ENCODE measurements at regions of chr10 and their contacts with region 1.

Region 1: DNA sequence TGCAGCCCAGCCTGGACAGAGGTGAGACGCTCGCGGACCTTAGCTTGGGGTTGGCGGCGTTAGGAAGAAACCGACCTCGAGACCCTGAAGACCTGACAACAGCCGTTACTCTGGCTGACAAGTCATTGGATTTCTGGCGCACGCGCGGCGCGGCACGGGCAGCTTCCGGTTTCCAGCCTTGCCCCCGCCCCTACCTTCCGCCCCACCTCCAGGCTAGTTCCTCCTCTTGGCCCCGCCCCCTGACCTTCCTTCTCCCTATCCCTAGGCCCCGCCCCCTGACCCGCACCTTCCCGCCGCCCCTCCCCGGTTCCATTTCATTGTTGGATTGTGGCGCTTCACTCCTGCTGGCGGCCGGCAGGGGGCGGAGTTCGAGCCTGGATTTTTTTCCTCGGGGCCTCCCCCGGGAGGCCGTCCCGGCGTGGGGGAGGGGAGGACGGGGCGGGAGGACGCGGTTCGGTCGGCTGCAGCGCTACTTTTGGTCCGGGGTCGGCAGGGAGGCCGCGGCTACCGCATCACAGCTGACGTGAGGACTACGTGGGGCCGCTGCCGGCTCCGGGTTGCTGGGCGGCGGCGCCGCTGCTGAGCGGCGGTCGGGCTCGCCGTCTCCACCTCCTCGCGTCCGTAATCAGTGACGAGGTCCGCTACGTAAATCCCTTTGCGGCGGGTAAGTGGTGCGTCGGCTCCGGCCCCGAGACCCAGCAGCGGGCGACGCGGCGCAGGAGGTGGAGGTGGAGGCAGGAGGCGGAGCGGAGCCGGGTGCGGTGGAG is at the start of gene CREM:
- DNase-seq: peak; percentile 97 to 100 (median 99)
- ATAC-seq: peak; percentile 77 to 79
- H3K4me3 Mint-ChIP-seq: peak within 1 kb of the TSS; percentile 82 to 97 (median 92)
- H3K27ac Mint-ChIP-seq: peak within 1 kb of the TSS; percentile 95 to 100 (median 99)
- H3K4me1 Mint-ChIP-seq: peaks cover 6 to 51% (median 37%) of the 10 kb centered on the region in 4 donors
- H3K27me3 Mint-ChIP-seq: no peaks in the 10 kb centered on the region
- polyA plus RNA-seq, gene CREM: 20.4 to 29.6 (median 23.7) TPM

Region 2: DNA sequence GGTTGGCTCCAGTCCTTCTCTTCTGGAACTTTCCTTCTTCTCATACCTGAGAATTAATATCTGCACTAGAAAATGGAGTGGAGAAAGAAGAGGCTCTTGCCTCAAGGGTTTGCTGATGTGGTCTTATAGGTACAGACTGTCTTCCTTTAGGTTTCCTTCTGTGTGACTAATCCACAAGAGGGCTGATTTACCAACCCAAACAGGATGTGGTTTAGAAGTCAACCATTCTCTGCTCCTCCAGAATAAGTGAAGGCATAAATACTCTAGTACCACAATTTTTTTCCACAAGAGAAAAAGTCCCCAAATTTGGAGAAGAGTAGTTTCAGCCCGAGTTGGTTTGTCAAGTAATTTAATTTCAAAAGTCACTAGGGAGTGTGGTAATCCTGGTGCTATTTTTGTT is 1878.1 kb before region 1 on chr10:
- POLR2A ChIA-PET with region 1: interaction called, 10 read pairs
- DNase-seq: peak in 6 of 10 donors; percentile 3 to 80 (median 42)
- ATAC-seq: peak; percentile 98 to 100
- H3K4me3 Mint-ChIP-seq: peak overlapping the region; percentile 32 to 80 (median 69)
- H3K27ac Mint-ChIP-seq: peak overlapping the region; percentile 19 to 93 (median 70)
- H3K4me1 Mint-ChIP-seq: peaks cover 16 to 49% (median 44%) of the 10 kb centered on the region in 4 donors
- H3K27me3 Mint-ChIP-seq: no peaks in the 10 kb centered on the region

Region 3: GRCh38 chr10:35079763-35080162 is 47.0 kb before region 1 on chr10:
- POLR2A ChIA-PET with region 1: no interaction called
- DNase-seq: no peak
- ATAC-seq: no peak
- H3K4me3 Mint-ChIP-seq: no peak overlapping the region
- H3K27ac Mint-ChIP-seq: peak overlapping the region in 1 of 10 donors; percentile 4
- H3K4me1 Mint-ChIP-seq: peaks cover 23 to 54% (median 42%) of the 10 kb centered on the region in 4 donors
- H3K27me3 Mint-ChIP-seq: no peaks in the 10 kb centered on the region

Region 4: DNA sequence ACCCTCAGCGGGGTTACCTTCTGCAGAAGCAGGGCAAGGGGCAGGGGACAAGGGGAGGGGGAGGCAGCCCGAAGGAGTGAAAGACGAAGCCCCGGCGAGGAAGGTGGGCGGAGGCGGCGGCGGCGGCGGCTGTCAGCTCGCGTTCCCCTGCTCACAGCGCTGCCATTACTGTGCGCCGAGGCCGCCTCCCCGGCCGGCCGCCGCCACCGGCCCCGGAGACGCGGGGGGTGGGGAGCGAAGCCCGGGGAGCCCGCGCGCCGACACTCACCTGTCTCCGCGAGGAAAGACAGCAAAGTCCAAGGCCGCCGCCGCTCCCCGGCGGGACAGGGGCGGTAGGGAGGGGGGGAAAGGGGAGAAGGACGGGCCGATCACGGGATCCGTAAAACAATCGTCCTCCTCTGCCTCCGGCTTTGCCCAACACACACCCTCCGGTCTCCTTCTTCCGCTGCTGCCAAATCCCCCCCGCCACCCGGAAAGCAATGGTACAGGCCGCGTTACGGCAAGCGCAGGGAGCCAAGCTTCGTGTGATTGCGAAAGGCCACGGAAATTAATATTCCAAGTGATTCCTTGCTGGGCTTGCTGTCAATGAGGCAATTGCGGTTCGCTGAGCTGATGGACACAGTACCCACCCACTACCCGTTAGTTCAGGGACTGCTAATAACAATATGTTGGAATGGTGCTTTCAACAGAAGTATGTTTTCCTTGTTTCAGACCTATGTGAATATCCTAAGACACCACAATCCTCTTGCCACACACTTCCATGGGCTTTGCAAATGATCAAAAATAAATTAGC is 36.4 kb before region 1 on chr10 and contains the start of gene CUL2:
- POLR2A ChIA-PET with region 1: interaction called, 32 read pairs
- DNase-seq: peak; percentile 83 to 100 (median 92)
- ATAC-seq: peak; percentile 95 to 97
- H3K4me3 Mint-ChIP-seq: peak within 1 kb of the TSS; percentile 91 to 100 (median 96)
- H3K27ac Mint-ChIP-seq: peak within 1 kb of the TSS; percentile 91 to 100 (median 98)
- H3K4me1 Mint-ChIP-seq: peaks cover 22 to 52% (median 50%) of the 10 kb centered on the region in 4 donors
- H3K27me3 Mint-ChIP-seq: peaks cover 0 to 2% (median 0%) of the 10 kb centered on the region in 5 donors
- polyA plus RNA-seq, gene CUL2: 21.9 to 25.8 (median 22.5) TPM